ENCODE measurements at regions of chr6 and their contacts with region 1.

Region 1: DNA sequence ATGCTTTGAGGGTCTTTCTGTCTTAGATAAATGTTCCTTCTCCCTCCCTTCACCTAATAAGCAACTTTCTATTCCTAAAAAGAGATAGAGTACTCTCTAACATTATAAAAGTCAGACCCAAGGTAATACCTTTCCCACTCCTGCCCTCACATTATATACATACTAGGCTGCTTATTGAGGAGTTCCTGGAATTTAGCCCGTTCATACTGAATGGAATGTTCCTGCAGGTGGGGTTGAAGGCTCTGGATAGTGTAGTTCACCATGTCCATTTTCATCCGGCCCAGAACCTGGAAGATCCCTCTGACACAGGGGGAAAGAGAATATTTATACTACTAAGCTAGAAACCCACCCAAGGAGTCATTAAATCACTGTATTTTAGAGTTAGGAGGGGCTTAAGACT is 20.4 kb downstream of the TCP11 start:
- DNase-seq: no peak
- H3K4me3 ChIP-seq: no peak overlapping the region
- H3K27ac ChIP-seq: no peak overlapping the region
- H3K4me1 ChIP-seq: no peaks in the 10 kb centered on the region
- H3K27me3 ChIP-seq: no peaks in the 10 kb centered on the region
- CTCF ChIP-seq: no peak

Region 2: GRCh38 chr6:35048631-35049083 is 72.1 kb before region 1 on chr6:
- CTCF ChIA-PET with region 1: no interaction called
- dilution Hi-C with region 1: loop called (anchors 5 kb)
- in situ Hi-C with region 1: no loop called
- intact Hi-C with region 1: no loop called
- DNase-seq: no peak
- H3K4me3 ChIP-seq: no peak overlapping the region
- H3K27ac ChIP-seq: no peak overlapping the region
- H3K4me1 ChIP-seq: peaks cover 39% of the 10 kb centered on the region
- H3K27me3 ChIP-seq: no peaks in the 10 kb centered on the region
- CTCF ChIP-seq: no peak

Region 3: DNA sequence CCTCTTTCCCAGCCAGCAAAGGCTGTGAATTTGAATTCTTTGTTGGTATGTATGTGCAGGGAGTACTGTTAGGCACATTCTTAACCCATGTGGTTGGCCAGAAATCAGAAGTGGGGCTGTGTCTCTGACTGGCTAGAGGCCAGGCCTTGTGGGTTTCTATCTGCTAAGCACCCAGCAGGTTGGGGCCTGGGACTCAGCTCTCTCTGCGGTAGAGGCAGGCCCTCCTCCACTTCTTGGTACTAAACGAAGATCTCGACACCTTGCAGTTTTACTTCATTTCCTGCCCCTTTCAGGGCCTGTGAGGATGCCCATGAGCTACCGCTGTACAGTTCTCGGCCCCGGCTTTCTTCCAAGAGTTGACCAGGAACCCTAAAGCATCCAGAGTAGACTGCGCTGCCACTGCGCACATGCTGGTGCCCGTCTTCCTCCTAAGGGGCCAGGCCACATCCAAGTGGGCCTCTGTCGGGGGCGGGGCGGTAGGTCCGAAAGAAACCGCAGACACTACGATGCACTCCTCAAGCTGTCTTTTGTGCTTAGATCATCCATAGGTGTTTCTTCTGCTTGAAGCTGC is 30.7 kb before region 1 on chr6:
- CTCF ChIA-PET with region 1: no interaction called
- dilution Hi-C with region 1: no loop called
- in situ Hi-C with region 1: no loop called
- intact Hi-C with region 1: no loop called
- DNase-seq: peak; percentile 88
- H3K4me3 ChIP-seq: no peak overlapping the region
- H3K27ac ChIP-seq: peak overlapping the region; percentile 49
- H3K4me1 ChIP-seq: peaks cover 42% of the 10 kb centered on the region
- H3K27me3 ChIP-seq: no peaks in the 10 kb centered on the region
- CTCF ChIP-seq: no peak

Region 4: DNA sequence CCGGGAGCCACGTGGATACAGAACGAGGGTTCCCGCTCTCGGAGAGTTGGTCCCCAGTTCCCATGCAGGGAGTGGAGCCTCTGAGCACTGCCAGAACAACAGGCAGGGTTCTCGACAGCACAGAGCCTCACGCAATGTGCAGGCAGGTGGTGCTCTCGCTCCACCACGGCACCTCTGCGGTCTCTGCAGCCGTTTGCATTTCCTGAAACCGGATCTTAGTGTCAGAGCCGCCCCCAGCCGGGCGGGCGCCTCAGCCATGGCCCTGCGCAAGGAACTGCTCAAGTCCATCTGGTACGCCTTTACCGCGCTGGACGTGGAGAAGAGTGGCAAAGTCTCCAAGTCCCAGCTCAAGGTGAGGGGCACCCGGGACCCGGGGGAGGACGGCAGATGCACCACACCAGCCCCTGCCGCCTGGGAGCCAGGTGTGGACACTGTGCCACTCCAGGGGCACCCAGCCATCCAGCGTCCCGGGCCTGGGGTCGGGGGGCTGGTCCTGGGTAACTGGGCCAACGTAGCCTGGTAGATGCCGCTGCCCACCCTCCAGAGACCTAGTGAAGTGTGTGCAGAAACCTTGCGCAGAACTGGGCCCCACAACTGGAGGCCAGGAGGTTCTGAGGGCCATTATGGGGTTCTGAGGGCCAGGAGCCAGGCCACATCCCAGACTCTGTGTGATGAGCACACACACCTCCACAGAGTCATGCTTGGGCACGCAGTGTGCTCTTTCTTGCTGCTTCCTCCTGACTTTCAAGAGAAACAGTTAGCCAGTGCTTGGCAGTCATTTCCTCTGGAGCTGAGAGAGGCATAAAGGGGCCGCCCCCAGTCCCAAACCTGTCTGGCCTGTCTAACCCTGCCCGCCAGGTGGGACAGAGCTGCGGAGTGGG is 177.1 kb after region 1 on chr6 and contains the start of gene DEF6:
- CTCF ChIA-PET with region 1: no interaction called
- dilution Hi-C with region 1: no loop called
- in situ Hi-C with region 1: no loop called
- intact Hi-C with region 1: no loop called
- DNase-seq: peak; percentile 90
- H3K4me3 ChIP-seq: peak within 1 kb of the TSS; percentile 66 to 85 (median 76)
- H3K27ac ChIP-seq: peak within 1 kb of the TSS; percentile 80
- H3K4me1 ChIP-seq: peaks cover 35% of the 10 kb centered on the region
- H3K27me3 ChIP-seq: no peaks in the 10 kb centered on the region
- CTCF ChIP-seq: peak; percentile 92 to 98
- total RNA-seq, gene DEF6: 12.8 to 32.9 TPM

Measured in mammary epithelial cell (primary cell).